Mammary epithelial cell (primary cell): ENCODE measurements at regions of chr7 and their contacts with region 1.

Region 1: GRCh38 chr7:3482147-3482964 is 181.3 kb downstream of the SDK1 start:
- DNase-seq: peak; percentile 42
- H3K4me3 ChIP-seq: no peak overlapping the region
- H3K27ac ChIP-seq: no peak overlapping the region
- H3K4me1 ChIP-seq: no peaks in the 10 kb centered on the region
- H3K27me3 ChIP-seq: no peaks in the 10 kb centered on the region
- CTCF ChIP-seq: peak; percentile 33 to 37

Region 2: DNA sequence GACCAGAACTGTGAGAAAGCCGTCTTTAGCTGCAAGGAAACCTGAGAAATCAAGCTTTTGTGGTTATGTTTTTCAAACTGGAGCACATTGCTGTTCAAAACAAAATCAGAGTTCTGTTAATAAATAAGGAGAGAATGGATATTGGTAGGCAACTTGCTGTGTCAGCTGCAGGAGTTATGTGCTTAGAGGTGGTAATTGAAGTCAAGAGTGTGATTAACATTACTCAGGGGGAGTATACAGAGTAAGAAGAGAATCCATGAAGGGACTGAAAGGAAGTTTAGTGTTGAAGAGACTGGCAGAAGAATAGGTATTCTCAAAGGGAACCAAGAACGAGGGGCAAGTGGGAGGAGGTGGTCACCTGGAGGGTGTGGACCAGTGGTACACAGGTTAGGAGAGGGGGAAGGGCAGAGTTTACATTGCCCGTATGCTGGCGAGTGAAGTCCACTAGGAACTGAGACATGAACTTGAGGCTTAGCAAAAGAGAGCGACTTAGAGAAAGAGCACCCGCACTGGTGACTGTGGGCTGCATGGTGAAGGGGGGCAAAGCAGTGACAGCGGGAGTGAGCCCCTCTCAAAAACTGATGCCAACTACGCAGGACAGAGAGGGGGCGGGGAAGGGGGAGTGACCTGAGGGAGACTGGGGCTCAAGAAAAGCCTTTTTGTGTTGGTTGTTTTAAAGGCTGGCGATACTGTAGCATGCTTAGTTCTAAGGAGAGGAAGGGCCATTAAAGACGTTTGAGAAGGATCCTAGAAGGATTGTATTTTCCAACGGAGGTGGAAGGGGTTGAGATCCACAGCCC is 101.3 kb before region 1 on chr7:
- CTCF ChIA-PET with region 1: no interaction called
- dilution Hi-C with region 1: loop called (anchors 5 kb)
- in situ Hi-C with region 1: no loop called
- intact Hi-C with region 1: no loop called
- DNase-seq: no peak
- H3K4me3 ChIP-seq: no peak overlapping the region
- H3K27ac ChIP-seq: no peak overlapping the region
- H3K4me1 ChIP-seq: no peaks in the 10 kb centered on the region
- H3K27me3 ChIP-seq: no peaks in the 10 kb centered on the region
- CTCF ChIP-seq: no peak

Region 3: GRCh38 chr7:3559278-3559677 is 76.9 kb after region 1 on chr7:
- CTCF ChIA-PET with region 1: no interaction called
- dilution Hi-C with region 1: no loop called
- in situ Hi-C with region 1: no loop called
- intact Hi-C with region 1: loop called (anchors 2 kb)
- DNase-seq: peak; percentile 83
- H3K4me3 ChIP-seq: no peak overlapping the region
- H3K27ac ChIP-seq: no peak overlapping the region
- H3K4me1 ChIP-seq: no peaks in the 10 kb centered on the region
- H3K27me3 ChIP-seq: no peaks in the 10 kb centered on the region
- CTCF ChIP-seq: no peak

Region 4: DNA sequence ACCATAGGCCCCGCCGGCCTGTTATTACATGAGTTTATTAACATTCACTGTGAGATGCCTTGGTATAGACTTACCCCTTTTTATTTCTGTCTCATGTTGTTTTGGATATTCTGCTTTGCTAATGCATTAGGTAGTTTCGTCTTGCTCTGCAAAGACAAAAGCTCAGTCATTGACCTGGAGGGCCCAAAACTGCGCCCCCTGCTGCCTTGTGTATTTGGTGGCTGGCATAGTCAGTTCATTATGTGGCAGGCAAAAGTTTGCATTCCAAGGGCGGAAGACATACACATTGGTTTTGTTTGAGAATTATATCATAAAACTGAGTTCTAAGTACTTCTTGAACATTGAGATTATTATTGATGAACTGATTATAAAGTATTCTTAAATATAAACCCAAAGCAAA is 191.2 kb after region 1 on chr7:
- CTCF ChIA-PET with region 1: no interaction called
- dilution Hi-C with region 1: no loop called
- in situ Hi-C with region 1: no loop called
- intact Hi-C with region 1: loop called (anchors 1 kb)
- DNase-seq: no peak
- H3K4me3 ChIP-seq: no peak overlapping the region
- H3K27ac ChIP-seq: no peak overlapping the region
- H3K4me1 ChIP-seq: no peaks in the 10 kb centered on the region
- H3K27me3 ChIP-seq: no peaks in the 10 kb centered on the region
- CTCF ChIP-seq: peak in 1 of 2 donors; percentile 14

Region 5: GRCh38 chr7:4479367-4480039 is 997.1 kb after region 1 on chr7:
- CTCF ChIA-PET with region 1: no interaction called
- dilution Hi-C with region 1: no loop called
- in situ Hi-C with region 1: no loop called
- intact Hi-C with region 1: loop called (anchors 2 kb)
- DNase-seq: peak; percentile 55
- H3K4me3 ChIP-seq: no peak overlapping the region
- H3K27ac ChIP-seq: no peak overlapping the region
- H3K4me1 ChIP-seq: no peaks in the 10 kb centered on the region
- H3K27me3 ChIP-seq: no peaks in the 10 kb centered on the region
- CTCF ChIP-seq: peak; percentile 8 to 23